ENCODE measurements at regions of chr1 and their contacts with region 1.

Region 1: GRCh38 chr1:83583351-83584014 is 415.4 kb downstream of the TTLL7 start:
- DNase-seq: peak in 3 of 9 experiments; percentile 6 to 55 (median 28)
- ATAC-seq: no peak
- H3K4me3 ChIP-seq: no peak overlapping the region
- H3K4me3 Mint-ChIP-seq: no peak overlapping the region
- H3K27ac ChIP-seq: no peak overlapping the region
- H3K27ac Mint-ChIP-seq: no peak overlapping the region
- H3K4me1 ChIP-seq: no peaks in the 10 kb centered on the region
- H3K4me1 Mint-ChIP-seq: peaks cover 3% of the 10 kb centered on the region
- H3K27me3 ChIP-seq: no peaks in the 10 kb centered on the region
- H3K27me3 Mint-ChIP-seq: no peaks in the 10 kb centered on the region
- CTCF ChIP-seq: no peak

Region 2: GRCh38 chr1:82785268-82785790 is 798.2 kb before region 1 on chr1:
- CTCF ChIA-PET with region 1: no interaction called
- POLR2A ChIA-PET with region 1: no interaction called
- intact Hi-C with region 1: loop called in 1 of 2 experiments (anchors 10 kb)
- DNase-seq: no peak
- ATAC-seq: no peak
- H3K4me3 ChIP-seq: no peak overlapping the region
- H3K4me3 Mint-ChIP-seq: no peak overlapping the region
- H3K27ac ChIP-seq: no peak overlapping the region
- H3K27ac Mint-ChIP-seq: no peak overlapping the region
- H3K4me1 ChIP-seq: no peaks in the 10 kb centered on the region
- H3K4me1 Mint-ChIP-seq: no peaks in the 10 kb centered on the region
- H3K27me3 ChIP-seq: no peaks in the 10 kb centered on the region
- H3K27me3 Mint-ChIP-seq: no peaks in the 10 kb centered on the region
- CTCF ChIP-seq: no peak

Region 3: GRCh38 chr1:83318366-83318765 is 265.1 kb before region 1 on chr1:
- CTCF ChIA-PET with region 1: no interaction called
- POLR2A ChIA-PET with region 1: no interaction called
- intact Hi-C with region 1: loop called in 1 of 2 experiments (anchors 10 kb)
- DNase-seq: no peak
- ATAC-seq: no peak
- H3K4me3 ChIP-seq: no peak overlapping the region
- H3K4me3 Mint-ChIP-seq: no peak overlapping the region
- H3K27ac ChIP-seq: no peak overlapping the region
- H3K27ac Mint-ChIP-seq: no peak overlapping the region
- H3K4me1 ChIP-seq: no peaks in the 10 kb centered on the region
- H3K4me1 Mint-ChIP-seq: no peaks in the 10 kb centered on the region
- H3K27me3 ChIP-seq: no peaks in the 10 kb centered on the region
- H3K27me3 Mint-ChIP-seq: no peaks in the 10 kb centered on the region
- CTCF ChIP-seq: no peak

Region 4: GRCh38 chr1:83508485-83509151 is 74.9 kb before region 1 on chr1:
- CTCF ChIA-PET with region 1: no interaction called
- POLR2A ChIA-PET with region 1: no interaction called
- intact Hi-C with region 1: no loop called
- DNase-seq: peak in 8 of 9 experiments; percentile 1 to 84 (median 39)
- ATAC-seq: peak; percentile 92
- H3K4me3 ChIP-seq: peak overlapping the region in 1 of 2 experiments; percentile 7
- H3K4me3 Mint-ChIP-seq: peak overlapping the region; percentile 73
- H3K27ac ChIP-seq: peak overlapping the region in 1 of 2 experiments; percentile 47
- H3K27ac Mint-ChIP-seq: peak overlapping the region; percentile 91
- H3K4me1 ChIP-seq: peaks cover 24% of the 10 kb centered on the region
- H3K4me1 Mint-ChIP-seq: peaks cover 30% of the 10 kb centered on the region
- H3K27me3 ChIP-seq: no peaks in the 10 kb centered on the region
- H3K27me3 Mint-ChIP-seq: no peaks in the 10 kb centered on the region
- CTCF ChIP-seq: no peak

Region 5: GRCh38 chr1:83632906-83633305 is 49.4 kb after region 1 on chr1:
- CTCF ChIA-PET with region 1: no interaction called
- POLR2A ChIA-PET with region 1: no interaction called
- intact Hi-C with region 1: no loop called
- DNase-seq: no peak
- ATAC-seq: no peak
- H3K4me3 ChIP-seq: no peak overlapping the region
- H3K4me3 Mint-ChIP-seq: no peak overlapping the region
- H3K27ac ChIP-seq: no peak overlapping the region
- H3K27ac Mint-ChIP-seq: no peak overlapping the region
- H3K4me1 ChIP-seq: no peaks in the 10 kb centered on the region
- H3K4me1 Mint-ChIP-seq: no peaks in the 10 kb centered on the region
- H3K27me3 ChIP-seq: no peaks in the 10 kb centered on the region
- H3K27me3 Mint-ChIP-seq: no peaks in the 10 kb centered on the region
- CTCF ChIP-seq: no peak

Region 6: GRCh38 chr1:83857103-83857502 is 273.6 kb after region 1 on chr1:
- CTCF ChIA-PET with region 1: no interaction called
- POLR2A ChIA-PET with region 1: no interaction called
- intact Hi-C with region 1: loop called in 1 of 2 experiments (anchors 10 kb)
- DNase-seq: peak in 1 of 9 experiments; percentile 25
- ATAC-seq: no peak
- H3K4me3 ChIP-seq: no peak overlapping the region
- H3K4me3 Mint-ChIP-seq: no peak overlapping the region
- H3K27ac ChIP-seq: no peak overlapping the region
- H3K27ac Mint-ChIP-seq: no peak overlapping the region
- H3K4me1 ChIP-seq: no peaks in the 10 kb centered on the region
- H3K4me1 Mint-ChIP-seq: peaks cover 16% of the 10 kb centered on the region
- H3K27me3 ChIP-seq: no peaks in the 10 kb centered on the region
- H3K27me3 Mint-ChIP-seq: no peaks in the 10 kb centered on the region
- CTCF ChIP-seq: no peak